OCI-LY7 (cell line): ENCODE measurements at regions of chr1 and their contacts with region 1.

Region 1: DNA sequence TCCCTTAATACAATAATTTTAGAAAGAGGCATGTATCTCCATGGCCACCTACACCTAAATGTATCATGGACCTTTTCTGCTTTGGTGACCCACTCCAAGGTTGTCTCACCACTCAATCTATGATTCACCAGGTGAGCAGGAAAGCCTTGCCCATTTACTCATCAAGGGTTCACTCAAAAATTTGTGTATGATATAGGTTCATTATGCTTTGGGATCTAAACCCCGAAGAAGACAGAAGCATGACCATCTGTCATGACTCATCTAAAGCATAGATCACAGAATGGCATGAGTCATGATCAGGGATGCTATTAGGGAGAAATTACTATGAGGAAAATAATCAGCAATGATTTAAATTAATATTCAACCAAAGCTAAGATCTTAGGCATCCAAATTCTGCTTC is 38.5 kb downstream of the PYHIN1 start:
- DNase-seq: no peak
- H3K4me3 ChIP-seq: no peak overlapping the region
- H3K27ac ChIP-seq: no peak overlapping the region
- H3K4me1 ChIP-seq: no peaks in the 10 kb centered on the region
- CTCF ChIP-seq: no peak

Region 2: DNA sequence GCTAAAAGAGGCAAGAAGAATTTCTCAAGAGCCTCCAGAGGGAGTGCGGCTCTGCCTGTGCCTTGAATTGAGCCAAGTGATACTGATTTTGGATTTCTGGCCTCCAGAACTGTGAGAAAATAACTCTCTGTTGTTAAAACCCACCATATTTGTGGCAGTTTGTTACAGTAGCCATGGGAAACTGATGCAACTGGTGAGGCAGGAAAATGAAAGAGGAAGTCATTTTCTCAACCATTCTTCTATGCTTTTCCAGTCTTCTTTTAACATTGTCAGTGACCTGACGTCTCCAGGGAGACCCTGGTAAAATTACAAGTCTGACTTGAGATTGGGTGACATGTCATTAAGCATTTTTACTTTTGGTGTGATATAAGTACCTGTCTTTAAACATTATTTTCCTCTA is 405.2 kb before region 1 on chr1:
- CTCF ChIA-PET with region 1: no interaction called
- POLR2A ChIA-PET with region 1: no interaction called
- intact Hi-C with region 1: loop called (anchors 10 kb)
- DNase-seq: peak; percentile 78
- H3K4me3 ChIP-seq: peak overlapping the region; percentile 32
- H3K27ac ChIP-seq: peak overlapping the region; percentile 58
- H3K4me1 ChIP-seq: peaks cover 18% of the 10 kb centered on the region
- CTCF ChIP-seq: no peak

Region 3: GRCh38 chr1:159089184-159089791 is 119.4 kb after region 1 on chr1:
- CTCF ChIA-PET with region 1: no interaction called
- POLR2A ChIA-PET with region 1: no interaction called
- intact Hi-C with region 1: no loop called
- DNase-seq: peak; percentile 60
- H3K4me3 ChIP-seq: no peak overlapping the region
- H3K27ac ChIP-seq: no peak overlapping the region
- H3K4me1 ChIP-seq: peaks cover 10% of the 10 kb centered on the region
- CTCF ChIP-seq: peak; percentile 93